ENCODE measurements at regions of chr10 and their contacts with region 1.

Region 1: GRCh38 chr10:111392159-111392558 is 315.3 kb downstream of the ADRA2A start:
- DNase-seq: no peak
- H3K4me3 ChIP-seq: no peak overlapping the region
- H3K27ac ChIP-seq: no peak overlapping the region
- H3K4me1 ChIP-seq: no peaks in the 10 kb centered on the region
- H3K27me3 ChIP-seq: no peaks in the 10 kb centered on the region
- CTCF ChIP-seq: no peak
- EP300 ChIP-seq: no peak
- POLR2A ChIP-seq: no peak

Region 2: GRCh38 chr10:110959379-110960332 is 432.5 kb before region 1 on chr10:
- in situ Hi-C with region 1: no loop called
- intact Hi-C with region 1: loop called (anchors 5 kb)
- DNase-seq: no peak
- H3K4me3 ChIP-seq: no peak overlapping the region
- H3K27ac ChIP-seq: no peak overlapping the region
- H3K4me1 ChIP-seq: peaks cover 0 to 25% (median 13%) of the 10 kb centered on the region in 4 donors
- H3K27me3 ChIP-seq: no peaks in the 10 kb centered on the region
- CTCF ChIP-seq: no peak
- EP300 ChIP-seq: no peak
- POLR2A ChIP-seq: no peak

Region 3: GRCh38 chr10:111137012-111137411 is 255.1 kb before region 1 on chr10:
- in situ Hi-C with region 1: no loop called
- intact Hi-C with region 1: no loop called
- DNase-seq: no peak
- H3K4me3 ChIP-seq: no peak overlapping the region
- H3K27ac ChIP-seq: no peak overlapping the region
- H3K4me1 ChIP-seq: no peaks in the 10 kb centered on the region
- H3K27me3 ChIP-seq: no peaks in the 10 kb centered on the region
- CTCF ChIP-seq: no peak
- EP300 ChIP-seq: no peak
- POLR2A ChIP-seq: no peak

Region 4: GRCh38 chr10:111303887-111304286 is 88.3 kb before region 1 on chr10:
- in situ Hi-C with region 1: no loop called
- intact Hi-C with region 1: no loop called
- DNase-seq: no peak
- H3K4me3 ChIP-seq: no peak overlapping the region
- H3K27ac ChIP-seq: no peak overlapping the region
- H3K4me1 ChIP-seq: no peaks in the 10 kb centered on the region
- H3K27me3 ChIP-seq: no peaks in the 10 kb centered on the region
- CTCF ChIP-seq: no peak
- EP300 ChIP-seq: no peak
- POLR2A ChIP-seq: no peak

Region 5: DNA sequence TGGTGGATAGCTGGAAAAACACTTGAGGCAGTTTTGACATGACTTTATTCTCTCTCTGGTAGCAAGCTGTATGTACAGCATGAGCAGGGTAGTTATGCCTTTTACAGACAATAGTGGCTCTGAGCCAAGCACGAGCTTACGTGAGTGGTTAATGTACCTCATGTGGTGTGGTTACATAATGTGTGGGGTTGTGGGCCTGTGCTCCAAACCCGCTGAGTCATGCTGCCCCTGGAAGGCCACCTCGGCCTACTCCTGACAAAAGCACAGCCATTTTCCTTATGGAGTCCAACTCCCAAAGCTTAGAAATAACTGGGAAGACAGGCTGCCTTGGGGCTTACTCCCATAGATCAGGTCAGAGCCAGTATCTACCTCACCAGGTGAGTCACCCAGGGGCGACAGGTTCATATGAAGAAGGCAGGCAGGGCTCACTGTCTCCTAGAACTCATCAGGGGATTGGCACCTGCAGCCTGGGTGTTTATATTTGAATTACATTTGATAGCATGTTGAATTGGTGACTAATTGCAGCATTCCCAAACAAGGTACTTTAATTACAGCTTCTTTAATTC is 89.2 kb after region 1 on chr10:
- in situ Hi-C with region 1: no loop called
- intact Hi-C with region 1: no loop called
- DNase-seq: no peak
- H3K4me3 ChIP-seq: no peak overlapping the region
- H3K27ac ChIP-seq: no peak overlapping the region
- H3K4me1 ChIP-seq: no peaks in the 10 kb centered on the region
- H3K27me3 ChIP-seq: no peaks in the 10 kb centered on the region
- CTCF ChIP-seq: no peak
- EP300 ChIP-seq: no peak
- POLR2A ChIP-seq: no peak

Region 6: DNA sequence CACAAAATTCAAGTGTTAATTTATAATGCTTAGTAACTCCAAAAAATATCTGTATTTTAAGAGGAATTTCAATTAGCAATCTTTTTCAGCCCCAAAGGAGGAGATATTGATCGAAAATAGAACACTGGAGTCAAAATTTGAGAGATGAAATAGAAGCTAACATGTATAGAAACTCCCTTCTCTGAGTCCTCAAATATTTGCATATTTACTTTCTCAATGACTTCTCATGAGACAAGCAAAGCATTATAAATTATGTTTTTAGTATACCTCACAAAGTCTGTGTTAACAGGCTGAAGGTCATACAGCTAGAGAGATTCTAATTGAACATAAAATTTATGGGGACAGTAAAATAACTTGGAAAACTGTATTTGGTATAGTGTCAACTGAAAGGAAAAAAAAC is 530.9 kb after region 1 on chr10:
- in situ Hi-C with region 1: no loop called
- intact Hi-C with region 1: no loop called
- DNase-seq: no peak
- H3K4me3 ChIP-seq: no peak overlapping the region
- H3K27ac ChIP-seq: no peak overlapping the region
- H3K4me1 ChIP-seq: no peaks in the 10 kb centered on the region
- H3K27me3 ChIP-seq: no peaks in the 10 kb centered on the region
- CTCF ChIP-seq: no peak
- EP300 ChIP-seq: no peak
- POLR2A ChIP-seq: no peak

Measured in transverse colon (tissue), 4 donors.